Right ventricle myocardium superior (tissue), 1 donor: ENCODE measurements at regions of chr9 and their contacts with region 1.

Region 1: GRCh38 chr9:116450378-116451139 is 236.5 kb upstream of the TRIM32 start:
- DNase-seq: no peak
- ATAC-seq: no peak

Region 2: DNA sequence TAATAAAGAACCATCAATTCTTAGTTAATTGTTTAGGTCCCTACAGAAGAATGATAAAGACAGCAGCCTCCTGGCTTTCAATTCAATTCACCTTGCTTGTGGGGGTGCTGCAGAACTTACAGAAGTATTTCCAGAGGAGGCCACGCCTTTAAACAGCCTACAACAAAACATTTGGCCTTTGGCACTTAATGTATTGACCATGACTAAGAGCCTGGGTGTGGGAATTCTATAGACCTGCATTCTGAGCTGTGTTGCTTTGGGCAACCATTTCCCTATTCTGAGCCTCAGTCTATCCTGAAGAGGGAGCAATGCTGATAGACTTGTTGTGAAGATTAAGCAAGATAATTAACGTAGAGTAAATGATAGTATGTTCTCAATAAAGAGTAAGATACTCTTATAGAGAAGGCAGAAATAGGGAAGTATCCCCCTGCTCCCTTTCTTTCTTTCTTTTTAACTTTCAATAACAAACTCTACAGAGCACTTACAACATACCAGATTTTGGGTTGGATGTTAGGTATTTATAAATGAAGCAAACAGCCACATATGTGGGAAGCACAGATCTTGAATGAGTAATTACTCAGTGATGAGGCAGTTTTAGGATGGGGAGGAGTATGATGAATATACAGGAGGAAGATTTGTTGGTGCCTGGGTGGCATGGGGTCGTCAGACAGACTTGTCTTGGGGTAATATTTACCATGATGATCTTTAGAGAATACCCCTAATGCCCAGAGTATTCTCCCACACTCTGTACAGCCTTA is 268.5 kb before region 1 on chr9:
- intact Hi-C with region 1: loop called (anchors 10 kb)
- DNase-seq: no peak
- ATAC-seq: no peak

Region 3: GRCh38 chr9:116223926-116224325 is 226.6 kb before region 1 on chr9:
- intact Hi-C with region 1: no loop called
- DNase-seq: no peak
- ATAC-seq: no peak

Region 4: DNA sequence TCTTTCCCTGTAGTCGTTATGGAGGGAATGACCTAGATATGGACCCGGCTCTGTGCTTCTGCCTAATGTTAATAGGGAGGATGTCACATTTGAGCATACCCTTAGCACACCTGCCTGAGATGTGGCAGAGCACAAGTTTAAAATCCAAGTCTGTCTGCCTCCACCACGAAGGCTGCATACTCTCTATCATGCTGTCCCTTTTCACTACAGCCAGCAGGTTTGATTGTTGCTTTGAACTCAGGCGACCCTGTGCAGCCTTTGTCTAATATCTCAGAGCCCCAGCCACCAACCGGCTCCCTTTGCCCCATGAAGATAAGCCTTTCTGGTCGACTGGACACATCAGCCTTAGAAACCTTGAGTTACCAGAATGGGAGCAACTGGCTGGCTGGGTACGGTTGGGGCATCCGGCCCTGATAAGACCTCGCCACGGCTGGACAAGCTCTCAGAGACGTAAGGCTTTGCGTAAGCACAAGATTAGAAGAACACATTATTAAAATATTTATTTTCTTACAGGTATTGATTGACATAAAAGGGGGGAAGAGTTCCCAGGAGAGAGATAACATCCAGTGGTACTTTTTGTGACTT is 14.5 kb after region 1 on chr9:
- intact Hi-C with region 1: no loop called
- DNase-seq: no peak
- ATAC-seq: no peak

Region 5: DNA sequence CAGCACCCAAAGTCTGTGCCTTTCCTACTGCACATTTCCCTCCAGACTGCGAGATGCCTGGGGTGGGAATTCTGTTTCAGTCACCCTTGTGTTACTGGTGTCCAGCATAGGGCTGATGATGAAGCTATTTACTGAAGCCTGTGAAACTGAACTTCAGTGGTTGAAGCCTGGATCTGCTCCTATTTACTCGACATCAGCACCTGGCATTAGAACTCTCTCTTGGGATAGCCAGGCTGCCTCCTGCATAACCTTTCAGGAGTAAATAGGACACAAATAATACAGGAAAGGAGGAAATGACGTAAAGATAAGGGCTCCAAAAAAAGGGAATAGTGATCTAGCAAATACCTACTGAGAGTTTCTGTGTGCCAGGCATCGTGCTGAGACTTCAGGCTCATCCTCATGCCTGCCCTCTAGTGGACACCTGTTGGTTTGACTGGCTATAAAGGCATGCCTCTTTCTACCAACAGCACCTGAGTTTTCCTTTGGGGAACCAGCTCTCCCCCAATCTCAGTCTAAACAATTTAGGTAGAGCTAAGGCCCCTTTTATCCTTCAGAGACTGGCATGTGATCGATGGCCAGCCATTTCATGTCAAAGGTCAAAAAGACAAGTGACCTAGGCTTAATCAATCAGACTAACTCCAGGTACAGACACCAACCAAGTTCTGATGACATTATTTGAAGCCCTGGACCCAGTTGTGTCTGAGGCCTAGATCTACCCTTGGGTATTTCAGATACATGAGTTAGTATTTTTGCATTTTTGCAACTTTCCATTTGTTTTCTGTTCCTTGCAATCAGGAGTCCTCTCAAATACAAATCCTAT is 44.5 kb after region 1 on chr9:
- intact Hi-C with region 1: no loop called
- DNase-seq: no peak
- ATAC-seq: peak; percentile 62